ENCODE measurements at regions of chr16 and their contacts with region 1.

Region 1: GRCh38 chr16:2769675-2770056 is 7.4 kb downstream of the ELOB start:
- DNase-seq: peak; percentile 69

Region 2: GRCh38 chr16:3190949-3191353 is 421.3 kb after region 1 on chr16:
- intact Hi-C with region 1: loop called in 1 of 2 experiments (anchors 5 kb)
- DNase-seq: no peak

Measured in posterior vena cava (tissue), 2 donors.